ENCODE measurements at regions of chr10 and their contacts with region 1.

Region 1: DNA sequence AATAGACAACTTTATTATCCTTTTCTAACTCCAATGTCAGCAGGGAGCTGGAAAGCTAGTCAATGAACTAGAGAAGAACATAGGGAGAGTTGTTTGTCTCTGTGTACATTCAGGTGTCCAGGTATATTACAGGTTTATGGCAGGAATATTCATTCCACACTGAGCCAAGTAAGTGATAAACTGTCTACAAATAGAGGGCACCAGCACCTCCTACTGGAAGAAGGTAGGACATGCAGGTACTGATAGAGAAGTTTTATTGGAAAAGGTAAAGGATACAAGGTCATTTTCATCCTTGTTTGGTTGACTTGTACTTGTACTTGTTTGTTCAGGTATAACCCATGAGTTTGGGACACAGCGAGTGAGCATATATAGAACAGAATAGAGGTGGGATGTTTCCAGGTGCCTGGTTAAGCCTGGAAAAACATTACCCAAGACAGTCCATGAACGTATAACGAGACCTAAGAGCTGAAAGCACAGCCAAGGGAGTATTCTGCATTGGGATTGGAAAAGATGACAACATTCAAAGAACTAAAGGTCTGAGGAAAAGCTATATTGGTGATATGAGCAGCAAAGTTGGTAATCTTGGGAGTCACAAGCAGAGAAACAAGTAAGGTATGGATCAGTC is 61.4 kb upstream of the PPP1R3C start:
- DNase-seq: peak; percentile 54 to 58
- ATAC-seq: peak in 1 of 2 experiments; percentile 78; a peak in 3 of 6 replicates
- H3K4me3 ChIP-seq: no peak overlapping the region
- H3K27ac ChIP-seq: no peak overlapping the region
- H3K4me1 ChIP-seq: peaks cover 5% of the 10 kb centered on the region; the same call in 1 of the 3 replicates
- CTCF ChIP-seq: peak; percentile 75
- EP300 ChIP-seq: no peak
- POLR2A ChIP-seq: no peak
- RAD21 ChIP-seq: peak; percentile 79 to 91

Region 2: DNA sequence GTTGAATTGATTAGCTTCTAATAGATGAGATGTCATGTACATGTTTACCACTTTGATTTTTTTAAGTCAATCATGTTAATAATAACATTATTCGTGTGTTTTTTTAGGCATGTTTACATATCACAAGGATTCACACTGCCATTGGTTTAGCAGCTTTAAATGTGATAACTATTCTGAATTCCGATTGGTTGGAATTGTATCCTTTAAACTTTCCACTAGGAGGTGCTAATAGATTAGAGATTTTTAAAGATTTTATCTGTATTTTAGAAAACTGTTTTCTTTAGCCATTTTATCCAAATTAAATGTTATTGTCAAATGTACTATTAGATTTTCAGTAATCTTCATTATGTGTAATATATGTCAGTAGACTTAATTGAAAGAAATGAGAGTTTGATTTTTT is 201.0 kb before region 1 on chr10:
- CTCF ChIA-PET with region 1: interaction called, 13 read pairs
- POLR2A ChIA-PET with region 1: no interaction called
- DNase-seq: peak; percentile 15 to 61
- ATAC-seq: peak in 1 of 2 experiments; percentile 55; a peak in 1 of 6 replicates
- H3K4me3 ChIP-seq: no peak overlapping the region
- H3K27ac ChIP-seq: no peak overlapping the region
- H3K4me1 ChIP-seq: peaks cover 6% of the 10 kb centered on the region; the same call in 2 of the 3 replicates
- CTCF ChIP-seq: peak; percentile 64
- EP300 ChIP-seq: no peak
- POLR2A ChIP-seq: no peak
- RAD21 ChIP-seq: peak; percentile 67 to 88

Region 3: DNA sequence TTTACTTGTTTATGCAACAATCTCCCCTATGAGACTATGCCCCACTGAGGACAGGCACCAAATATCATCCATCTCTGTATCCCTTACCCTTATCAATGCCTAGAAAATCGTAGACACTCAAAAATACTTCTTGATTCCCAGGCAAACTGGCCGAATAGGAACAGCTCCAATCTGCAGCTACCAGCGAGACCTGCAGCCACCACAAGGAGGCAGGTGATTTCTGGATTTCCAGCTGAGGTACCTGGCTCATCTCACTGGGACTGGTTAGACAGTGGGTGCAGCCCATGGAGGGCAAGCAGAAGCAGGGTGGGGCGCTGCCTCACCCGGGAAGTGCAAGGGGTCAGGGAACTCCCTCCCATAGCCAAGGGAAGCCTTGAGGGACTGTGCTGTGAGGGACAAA is 50.6 kb before region 1 on chr10:
- CTCF ChIA-PET with region 1: interaction called, 22 read pairs
- POLR2A ChIA-PET with region 1: no interaction called
- DNase-seq: peak in 1 of 2 experiments; percentile 66
- ATAC-seq: peak; percentile 68 to 96; a peak in 5 of 6 replicates
- H3K4me3 ChIP-seq: no peak overlapping the region
- H3K27ac ChIP-seq: peak overlapping the region; percentile 60 to 66; a peak in 4 of 6 replicates
- H3K4me1 ChIP-seq: peaks cover 21% of the 10 kb centered on the region
- CTCF ChIP-seq: peak; percentile 40
- EP300 ChIP-seq: no peak
- POLR2A ChIP-seq: no peak
- RAD21 ChIP-seq: peak; percentile 50 to 72; a peak in 4 of 5 replicates

Region 4: DNA sequence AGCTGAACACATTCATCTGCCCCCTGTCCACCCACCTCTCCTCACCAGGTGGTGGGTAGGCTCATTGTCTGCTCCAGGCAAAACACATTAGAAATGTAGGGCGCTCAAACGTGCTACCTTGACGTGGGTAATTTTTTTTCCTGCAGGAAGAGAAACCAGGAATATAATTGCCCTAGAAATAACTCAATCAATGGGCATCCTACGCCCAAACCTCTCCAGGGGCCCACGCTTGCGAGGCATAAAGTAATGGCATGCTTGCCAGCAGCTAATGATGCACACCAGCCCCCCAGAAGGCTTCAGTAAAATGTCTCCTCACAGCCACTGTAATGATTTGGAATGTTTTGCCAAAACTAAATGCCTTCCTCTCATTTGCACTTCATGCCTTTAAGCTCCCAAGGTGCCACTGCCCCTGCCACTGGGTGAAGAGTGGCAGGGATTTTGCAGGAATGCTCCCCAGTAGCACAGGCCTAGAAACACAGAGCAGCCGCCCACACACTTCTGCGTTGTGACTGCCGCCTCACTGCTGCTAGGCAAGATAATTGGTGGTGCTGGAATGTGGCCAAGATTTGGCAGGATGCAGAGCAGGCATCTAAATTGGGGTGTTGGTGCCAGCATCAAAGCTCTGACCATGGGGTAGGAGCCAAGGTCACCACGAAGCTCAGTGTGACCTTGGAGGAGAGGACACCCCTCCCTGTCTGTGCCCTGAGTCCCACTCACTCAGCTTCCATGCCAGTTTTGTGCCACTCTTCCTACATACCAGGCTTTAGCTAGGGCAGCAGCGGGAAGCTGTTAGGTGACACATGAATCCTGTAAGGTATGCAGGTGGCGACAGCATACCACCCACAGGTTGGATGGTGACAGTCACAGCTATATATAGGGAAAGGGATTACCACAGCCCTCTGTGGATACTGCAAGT is 12.7 kb before region 1 on chr10:
- CTCF ChIA-PET with region 1: interaction called, 13 read pairs
- POLR2A ChIA-PET with region 1: no interaction called
- DNase-seq: no peak
- ATAC-seq: no peak
- H3K4me3 ChIP-seq: no peak overlapping the region
- H3K27ac ChIP-seq: no peak overlapping the region
- H3K4me1 ChIP-seq: peaks cover 13% of the 10 kb centered on the region
- CTCF ChIP-seq: no peak
- EP300 ChIP-seq: no peak
- POLR2A ChIP-seq: no peak
- RAD21 ChIP-seq: no peak

Region 5: GRCh38 chr10:91838199-91838598 is 143.9 kb after region 1 on chr10:
- CTCF ChIA-PET with region 1: no interaction called
- POLR2A ChIA-PET with region 1: no interaction called
- DNase-seq: no peak
- ATAC-seq: no peak
- H3K4me3 ChIP-seq: no peak overlapping the region
- H3K27ac ChIP-seq: no peak overlapping the region
- H3K4me1 ChIP-seq: no peaks in the 10 kb centered on the region
- CTCF ChIP-seq: no peak
- EP300 ChIP-seq: no peak
- POLR2A ChIP-seq: no peak
- RAD21 ChIP-seq: no peak

Measured in A549 (cell line).